Endothelial cell of umbilical vein (primary cell): ENCODE measurements at regions of chr11 and their contacts with region 1.

Region 1: GRCh38 chr11:36492724-36493304 is 17.3 kb downstream of the TRAF6 start:
- DNase-seq: peak; percentile 68
- H3K4me3 ChIP-seq: no peak overlapping the region
- H3K27ac ChIP-seq: no peak overlapping the region
- H3K4me1 ChIP-seq: peaks cover 10% of the 10 kb centered on the region
- H3K27me3 ChIP-seq: no peaks in the 10 kb centered on the region
- CTCF ChIP-seq: peak; percentile 63 to 66
- POLR2A ChIP-seq: no peak

Region 2: DNA sequence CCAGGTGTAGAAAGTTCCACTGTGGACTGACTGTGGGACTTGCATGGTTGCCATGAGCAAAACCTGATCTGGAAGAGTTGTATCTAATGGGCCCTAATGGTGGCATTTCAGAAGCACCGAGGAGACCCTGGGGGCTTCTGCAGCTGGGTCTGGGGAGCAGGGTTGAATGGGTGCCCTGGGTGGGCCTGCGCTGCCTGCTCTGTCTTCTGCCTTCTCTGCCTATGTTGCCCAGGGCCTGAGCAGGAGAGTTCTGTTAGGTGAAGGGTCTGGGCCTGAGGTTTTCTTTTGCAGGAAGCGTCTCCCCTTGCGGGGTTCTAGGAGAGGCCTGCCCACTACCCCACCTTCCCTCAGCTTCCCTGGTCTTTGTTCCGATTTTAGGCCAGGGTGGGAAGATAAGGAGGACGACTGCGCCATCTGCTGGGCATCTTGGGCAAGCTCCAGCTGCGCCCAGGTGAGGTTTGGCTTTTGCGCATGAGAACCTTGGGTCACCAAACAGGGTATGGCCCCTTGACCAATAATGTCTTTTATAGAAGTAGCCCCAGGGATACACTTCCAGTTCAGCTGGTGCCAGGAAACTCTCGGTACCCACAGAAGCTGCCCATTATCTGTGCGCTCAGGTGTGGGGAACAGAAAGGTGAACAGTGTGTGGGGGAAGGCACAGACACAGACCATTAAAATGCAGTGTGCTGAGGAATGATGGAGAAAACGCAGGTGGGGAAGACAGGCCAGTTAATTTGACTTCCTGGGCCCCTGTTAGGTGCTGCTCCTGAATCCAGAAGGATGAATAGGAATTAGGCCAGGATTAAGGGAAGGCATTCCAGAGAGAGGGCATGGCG is 226.8 kb before region 1 on chr11:
- CTCF ChIA-PET with region 1: interaction called, 13 read pairs
- POLR2A ChIA-PET with region 1: no interaction called
- dilution Hi-C with region 1: no loop called
- intact Hi-C with region 1: no loop called
- DNase-seq: peak; percentile 40
- H3K4me3 ChIP-seq: no peak overlapping the region
- H3K27ac ChIP-seq: no peak overlapping the region
- H3K4me1 ChIP-seq: no peaks in the 10 kb centered on the region
- H3K27me3 ChIP-seq: peaks cover 0 to 5% of the 10 kb centered on the region in 2 experiments
- CTCF ChIP-seq: peak; percentile 86 to 89
- POLR2A ChIP-seq: no peak

Region 3: DNA sequence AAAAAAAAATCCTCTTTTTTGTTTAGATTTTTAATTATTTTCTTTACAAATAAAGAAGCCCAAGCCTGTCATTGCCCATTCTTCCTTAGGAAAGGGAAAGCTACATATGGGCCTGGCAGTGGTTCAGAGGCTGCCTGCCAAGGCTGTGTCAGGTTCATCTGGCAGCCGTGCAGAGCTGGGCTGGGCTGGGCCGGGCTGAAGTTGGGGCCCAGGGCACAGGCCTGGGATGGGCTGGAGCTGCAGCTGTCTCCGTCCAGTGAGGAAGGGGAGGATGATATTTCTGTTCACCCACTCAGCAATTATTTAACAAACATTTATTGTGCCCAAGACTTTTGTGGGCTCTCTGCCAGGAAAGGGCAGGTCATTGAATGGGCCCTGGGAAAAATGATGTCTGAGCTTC is 192.2 kb before region 1 on chr11:
- CTCF ChIA-PET with region 1: interaction called, 167 read pairs
- POLR2A ChIA-PET with region 1: no interaction called
- dilution Hi-C with region 1: no loop called
- intact Hi-C with region 1: no loop called
- DNase-seq: peak; percentile 25
- H3K4me3 ChIP-seq: no peak overlapping the region
- H3K27ac ChIP-seq: no peak overlapping the region
- H3K4me1 ChIP-seq: no peaks in the 10 kb centered on the region
- H3K27me3 ChIP-seq: peaks cover 2 to 5% of the 10 kb centered on the region in 2 experiments
- CTCF ChIP-seq: no peak
- POLR2A ChIP-seq: no peak

Region 4: GRCh38 chr11:36376888-36377758 is 115.7 kb before region 1 on chr11:
- CTCF ChIA-PET with region 1: interaction called, 51 read pairs
- POLR2A ChIA-PET with region 1: no interaction called
- dilution Hi-C with region 1: no loop called
- intact Hi-C with region 1: loop called (anchors 1 kb)
- DNase-seq: peak; percentile 35
- H3K4me3 ChIP-seq: peak overlapping the region; percentile 53 to 74 (median 69)
- H3K27ac ChIP-seq: no peak overlapping the region
- H3K4me1 ChIP-seq: peaks cover 10% of the 10 kb centered on the region
- H3K27me3 ChIP-seq: peaks cover 19% of the 10 kb centered on the region in 2 experiments
- CTCF ChIP-seq: peak; percentile 75 to 81
- POLR2A ChIP-seq: no peak

Region 5: DNA sequence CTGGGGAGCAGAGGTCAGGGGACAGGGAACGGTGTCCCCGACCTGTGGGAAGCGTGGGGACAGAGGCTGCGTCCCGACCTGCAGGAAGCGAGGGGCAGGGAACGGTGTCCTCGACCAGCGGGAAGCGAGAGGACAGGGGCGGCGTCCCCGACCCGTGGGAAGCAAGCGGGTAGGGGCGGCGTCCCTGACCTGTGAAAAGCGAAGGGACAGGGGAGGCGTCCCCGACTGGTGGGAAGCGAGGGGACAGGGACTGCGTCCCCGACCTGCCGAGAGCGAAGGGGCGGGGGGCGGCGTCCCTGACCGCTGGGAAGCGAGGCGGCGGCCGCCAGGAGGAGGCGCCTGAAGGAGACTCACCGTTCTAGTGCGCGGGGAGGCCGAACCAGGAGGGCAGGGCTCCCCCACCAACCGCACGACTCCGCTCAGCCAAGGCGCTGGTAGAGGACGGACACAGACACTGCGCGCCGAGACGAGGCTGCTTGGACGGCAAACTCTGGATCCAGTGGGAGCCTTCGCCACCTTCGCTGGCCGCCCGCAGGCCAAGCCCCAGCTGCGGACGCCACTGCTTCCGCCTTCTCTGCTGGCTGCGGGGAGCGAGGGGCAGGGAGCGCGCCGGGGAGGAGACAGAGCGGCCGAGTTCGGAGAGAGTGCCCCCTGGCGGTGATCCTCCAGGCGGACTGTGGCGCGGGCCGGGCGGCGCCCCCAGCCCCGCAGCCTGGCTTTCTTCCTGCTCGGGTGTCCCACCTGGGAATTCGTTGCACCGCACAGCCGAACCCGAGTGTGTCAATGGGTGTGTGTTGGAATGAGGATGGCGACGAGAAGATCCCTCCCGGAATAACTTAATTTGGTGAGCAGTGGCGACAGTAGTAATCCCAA is 17.1 kb after region 1 on chr11 and contains the start of gene TRAF6:
- CTCF ChIA-PET with region 1: interaction called, 27 read pairs
- POLR2A ChIA-PET with region 1: no interaction called
- dilution Hi-C with region 1: no loop called
- intact Hi-C with region 1: no loop called
- DNase-seq: peak; percentile 91
- H3K4me3 ChIP-seq: peak within 1 kb of the TSS; percentile 77 to 100 (median 88)
- H3K27ac ChIP-seq: peak within 1 kb of the TSS; percentile 50
- H3K4me1 ChIP-seq: peaks cover 16% of the 10 kb centered on the region
- H3K27me3 ChIP-seq: no peaks in the 10 kb centered on the region
- CTCF ChIP-seq: peak; percentile 90 to 92
- POLR2A ChIP-seq: peak; percentile 94
- total RNA-seq, gene TRAF6: 13.1 and 14.2 TPM in 2 replicates